Activated naive CD4-positive, alpha-beta T cell treated with anti-CD3 and anti-CD28 coated beads for 36 hours (primary cell): ENCODE measurements at regions of chr14 and their contacts with region 1.

Region 1: DNA sequence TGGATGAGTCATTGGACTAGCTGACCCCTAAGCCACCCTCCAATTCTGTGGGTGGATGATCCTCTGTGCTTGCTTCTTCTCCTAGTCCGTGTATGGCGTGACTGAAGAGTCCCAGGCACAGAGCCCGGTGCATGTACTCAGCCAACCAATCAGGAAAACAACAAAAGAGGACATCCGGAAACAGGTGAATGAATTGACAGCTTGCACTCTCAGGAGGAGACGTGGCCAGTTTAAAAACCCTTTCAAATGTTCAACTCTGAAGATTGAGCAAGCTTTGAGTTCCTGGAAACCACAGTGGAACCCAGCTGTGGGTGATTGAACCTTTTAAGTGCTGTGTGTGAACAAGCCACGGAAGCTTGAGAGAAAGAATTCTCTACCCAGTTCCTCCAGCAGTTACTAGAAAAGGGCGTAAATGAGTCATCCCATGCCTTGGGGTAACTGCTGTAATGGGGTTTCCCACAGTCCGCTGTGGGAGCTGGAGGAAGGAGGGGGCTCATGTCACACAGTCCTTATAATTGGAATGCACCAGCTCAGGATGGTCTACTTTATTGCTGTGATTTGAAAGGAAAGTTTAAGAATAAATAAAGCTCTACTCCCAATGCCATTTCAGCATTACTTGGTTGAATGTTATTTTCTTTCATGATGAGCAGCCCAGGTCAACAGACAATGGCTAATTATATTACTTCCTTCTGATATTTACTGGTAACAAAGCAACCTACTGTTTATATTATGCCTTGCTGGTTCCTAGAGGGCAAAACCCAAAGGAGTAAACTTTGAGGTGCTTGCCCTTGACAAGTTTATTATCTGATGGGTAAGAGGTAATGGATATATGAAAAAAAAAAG is 417.0 kb downstream of the DPF3 start:
- DNase-seq: peak; percentile 90
- H3K4me3 Mint-ChIP-seq: peak overlapping the region; percentile 38
- H3K27ac Mint-ChIP-seq: peak overlapping the region; percentile 81
- H3K4me1 Mint-ChIP-seq: peaks cover 31% of the 10 kb centered on the region
- H3K27me3 Mint-ChIP-seq: peaks cover 5% of the 10 kb centered on the region

Region 2: DNA sequence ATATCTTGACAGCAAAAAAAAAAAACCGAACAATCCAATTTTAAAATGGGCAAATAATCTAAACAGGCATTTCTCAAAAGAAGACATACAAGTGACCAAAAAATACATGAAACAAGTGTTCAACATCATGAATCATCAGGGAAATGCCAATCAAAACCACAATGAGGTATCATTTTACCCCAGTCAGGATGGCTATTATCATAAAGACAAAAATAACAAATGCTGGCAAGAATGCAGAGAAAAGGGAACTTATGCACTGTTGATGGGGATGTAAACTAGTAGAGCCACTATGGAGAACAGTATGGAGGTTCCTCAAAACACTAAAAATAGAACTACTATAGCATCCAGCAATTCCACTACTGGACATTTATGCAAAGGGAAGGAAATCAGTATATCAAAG is 96.4 kb before region 1 on chr14:
- CTCF ChIA-PET with region 1: no interaction called
- intact Hi-C with region 1: no loop called
- DNase-seq: no peak
- H3K4me3 Mint-ChIP-seq: no peak overlapping the region
- H3K27ac Mint-ChIP-seq: no peak overlapping the region
- H3K4me1 Mint-ChIP-seq: no peaks in the 10 kb centered on the region
- H3K27me3 Mint-ChIP-seq: peaks cover 20% of the 10 kb centered on the region

Region 3: GRCh38 chr14:72443991-72444441 is 32.9 kb before region 1 on chr14:
- CTCF ChIA-PET with region 1: interaction called, 3 read pairs
- intact Hi-C with region 1: loop called (anchors 5 kb)
- DNase-seq: peak; percentile 60
- H3K4me3 Mint-ChIP-seq: no peak overlapping the region
- H3K27ac Mint-ChIP-seq: peak overlapping the region; percentile 12
- H3K4me1 Mint-ChIP-seq: peaks cover 32% of the 10 kb centered on the region
- H3K27me3 Mint-ChIP-seq: no peaks in the 10 kb centered on the region

Region 4: DNA sequence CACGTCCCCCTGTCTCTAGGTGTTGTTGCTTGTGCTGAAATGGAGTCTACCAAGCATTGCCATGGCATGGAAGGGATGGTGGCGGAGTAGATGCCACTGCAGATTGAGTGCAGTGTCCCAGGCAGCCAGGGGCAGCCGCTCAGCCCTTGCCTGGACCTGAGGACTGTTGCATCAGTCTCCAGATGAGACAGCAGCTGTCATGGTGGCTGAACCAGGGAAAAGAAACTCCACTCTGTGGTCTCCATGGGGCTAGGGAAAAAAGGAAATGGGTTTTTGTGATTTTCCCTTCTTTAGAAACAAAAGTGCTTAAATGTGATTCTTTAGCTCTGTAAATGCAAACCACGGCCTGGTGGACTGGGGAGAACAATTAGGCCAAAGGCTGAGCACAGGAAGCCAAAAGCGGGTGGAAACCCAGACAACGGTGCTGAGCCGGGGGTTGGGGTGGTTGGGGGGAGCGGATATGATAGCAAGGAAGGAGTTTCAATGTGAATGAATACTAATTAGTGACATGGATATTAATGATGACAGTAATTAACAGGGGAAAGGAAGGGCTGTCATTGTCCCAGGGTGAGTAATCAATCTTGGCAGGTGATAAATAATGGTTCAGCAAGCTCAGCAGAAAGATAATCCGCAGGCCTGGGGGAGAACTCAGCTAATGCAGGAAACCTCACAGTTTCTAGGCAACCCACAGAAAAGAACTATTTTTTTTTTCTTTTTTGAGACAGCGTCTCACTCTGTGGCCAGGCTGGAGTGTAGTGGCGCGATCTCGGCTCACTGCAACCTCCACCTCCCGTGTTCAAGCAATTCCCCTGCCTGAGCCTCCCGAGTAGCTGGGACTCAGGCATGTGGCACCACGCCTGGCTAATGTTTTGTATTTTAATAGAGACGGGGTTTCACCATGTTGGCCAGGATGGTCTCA is 25.6 kb before region 1 on chr14:
- CTCF ChIA-PET with region 1: interaction called, 4 read pairs
- intact Hi-C with region 1: loop called (anchors 1 kb)
- DNase-seq: peak; percentile 64
- H3K4me3 Mint-ChIP-seq: no peak overlapping the region
- H3K27ac Mint-ChIP-seq: peak overlapping the region; percentile 71
- H3K4me1 Mint-ChIP-seq: peaks cover 23% of the 10 kb centered on the region
- H3K27me3 Mint-ChIP-seq: no peaks in the 10 kb centered on the region

Region 5: DNA sequence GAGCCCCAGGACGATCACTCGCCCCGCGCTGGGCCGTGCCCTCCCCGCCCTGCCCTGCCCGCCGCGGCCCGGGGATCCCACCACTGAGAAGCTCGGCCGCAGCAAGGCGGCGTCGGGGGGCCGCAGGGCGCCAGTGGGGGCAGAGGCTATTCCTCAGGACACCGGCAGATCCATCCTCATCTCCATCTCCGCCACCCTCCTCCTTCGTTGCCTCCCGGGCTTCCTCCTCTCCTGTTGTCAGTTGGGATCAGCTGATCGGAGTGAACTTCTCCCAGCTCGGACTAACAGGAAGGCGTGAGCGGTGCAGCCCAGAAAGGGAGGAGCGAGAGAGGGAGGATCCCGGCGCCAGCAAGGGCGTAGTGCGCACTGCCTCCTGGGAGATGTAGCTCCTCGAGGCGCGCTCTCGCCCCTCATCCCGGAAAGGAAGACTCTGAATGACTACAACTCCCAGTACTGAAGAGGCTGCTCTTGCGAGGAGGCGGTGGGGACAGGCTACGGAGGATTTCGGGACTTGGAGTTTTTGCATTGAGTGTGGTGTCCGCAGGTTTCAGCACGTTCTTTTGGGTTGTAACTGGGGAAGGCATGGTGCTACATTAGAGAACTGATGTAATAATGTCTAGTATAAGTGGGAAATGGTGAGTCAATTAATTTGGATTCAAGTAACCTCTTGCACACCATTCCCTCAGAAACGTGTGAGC is 550.1 kb after region 1 on chr14 and contains the start of gene ZFYVE1:
- CTCF ChIA-PET with region 1: no interaction called
- intact Hi-C with region 1: loop called (anchors 5 kb)
- DNase-seq: peak; percentile 97
- H3K4me3 Mint-ChIP-seq: peak within 1 kb of the TSS; percentile 92
- H3K27ac Mint-ChIP-seq: peak within 1 kb of the TSS; percentile 80
- H3K4me1 Mint-ChIP-seq: peaks cover 39% of the 10 kb centered on the region
- H3K27me3 Mint-ChIP-seq: no peaks in the 10 kb centered on the region
- total RNA-seq, gene ZFYVE1: 8.5 to 9.2 TPM